ENCODE measurements at regions of chrX and their contacts with region 1.

Region 1: DNA sequence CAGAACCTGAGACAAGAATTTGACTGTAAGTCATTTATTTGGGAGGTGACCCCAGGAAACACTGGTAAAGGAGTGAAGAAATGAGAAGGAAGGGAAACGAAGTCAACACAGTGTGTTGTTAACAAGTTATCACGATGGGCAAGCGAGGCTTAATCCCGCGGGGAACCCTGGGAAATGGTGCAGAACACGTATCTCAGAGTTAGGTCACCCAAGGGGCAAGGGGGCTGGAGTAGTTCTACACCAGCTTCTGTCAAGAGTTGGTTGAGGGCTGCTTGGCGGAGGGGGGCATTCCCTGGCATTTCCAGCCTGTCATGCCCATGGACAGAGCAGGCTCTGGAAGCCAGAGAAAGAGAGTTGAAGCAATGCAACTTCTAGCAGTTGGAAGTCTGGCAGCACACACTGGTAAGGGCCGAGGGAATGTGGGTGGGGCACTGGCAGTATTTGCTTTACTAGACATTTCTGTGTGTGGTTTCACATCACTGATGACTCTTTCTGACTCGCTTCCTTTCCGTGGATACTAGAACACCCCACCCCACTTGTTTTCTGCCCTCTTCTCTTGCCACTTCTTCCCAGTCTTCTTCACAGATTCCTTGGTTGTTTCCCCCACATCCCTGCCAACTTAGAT is 52.2 kb upstream of the ADGRG2 start:
- DNase-seq: peak; percentile 74
- H3K4me3 ChIP-seq: no peak overlapping the region
- H3K27ac ChIP-seq: peak overlapping the region; percentile 96
- H3K4me1 ChIP-seq: peaks cover 64% of the 10 kb centered on the region
- H3K27me3 ChIP-seq: no peaks in the 10 kb centered on the region
- CTCF ChIP-seq: no peak

Region 2: DNA sequence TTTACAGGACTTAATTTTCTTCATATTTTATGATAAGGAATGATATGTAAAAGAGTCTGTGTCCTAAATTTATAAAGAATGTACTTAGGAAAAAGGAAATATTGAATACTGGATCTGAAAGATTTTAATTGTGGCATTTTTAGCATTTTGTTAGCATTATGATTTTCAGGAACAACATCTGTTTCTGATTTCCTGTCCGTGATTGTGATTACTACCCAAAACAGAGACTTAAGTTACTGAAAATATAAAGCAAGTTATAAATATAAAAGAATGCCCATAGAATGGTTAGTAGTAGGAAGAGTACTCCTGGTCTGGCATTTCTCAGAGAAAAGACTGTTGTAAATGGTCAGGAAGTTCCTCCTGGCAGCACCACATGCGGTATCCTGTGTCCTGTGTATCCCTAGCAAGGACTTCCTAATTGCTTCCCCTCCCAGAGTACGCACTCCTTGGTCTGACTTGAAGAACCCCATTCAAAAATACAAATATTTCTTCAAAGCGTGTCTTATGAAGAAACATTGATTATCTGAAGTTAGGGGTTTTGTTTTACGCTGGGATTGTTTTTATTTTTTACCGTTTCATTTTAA is 591.5 kb before region 1 on chrX:
- CTCF ChIA-PET with region 1: no interaction called
- POLR2A ChIA-PET with region 1: no interaction called
- intact Hi-C with region 1: loop called (anchors 5 kb)
- DNase-seq: peak; percentile 93
- H3K4me3 ChIP-seq: peak overlapping the region; percentile 3
- H3K27ac ChIP-seq: peak overlapping the region; percentile 77
- H3K4me1 ChIP-seq: peaks cover 39% of the 10 kb centered on the region
- H3K27me3 ChIP-seq: no peaks in the 10 kb centered on the region
- CTCF ChIP-seq: no peak

Region 3: GRCh38 chrX:18994738-18995137 is 179.8 kb before region 1 on chrX:
- CTCF ChIA-PET with region 1: no interaction called
- POLR2A ChIA-PET with region 1: no interaction called
- intact Hi-C with region 1: loop called (anchors 1 kb)
- DNase-seq: no peak
- H3K4me3 ChIP-seq: no peak overlapping the region
- H3K27ac ChIP-seq: no peak overlapping the region
- H3K4me1 ChIP-seq: peaks cover 32% of the 10 kb centered on the region
- H3K27me3 ChIP-seq: no peaks in the 10 kb centered on the region
- CTCF ChIP-seq: no peak

Region 4: DNA sequence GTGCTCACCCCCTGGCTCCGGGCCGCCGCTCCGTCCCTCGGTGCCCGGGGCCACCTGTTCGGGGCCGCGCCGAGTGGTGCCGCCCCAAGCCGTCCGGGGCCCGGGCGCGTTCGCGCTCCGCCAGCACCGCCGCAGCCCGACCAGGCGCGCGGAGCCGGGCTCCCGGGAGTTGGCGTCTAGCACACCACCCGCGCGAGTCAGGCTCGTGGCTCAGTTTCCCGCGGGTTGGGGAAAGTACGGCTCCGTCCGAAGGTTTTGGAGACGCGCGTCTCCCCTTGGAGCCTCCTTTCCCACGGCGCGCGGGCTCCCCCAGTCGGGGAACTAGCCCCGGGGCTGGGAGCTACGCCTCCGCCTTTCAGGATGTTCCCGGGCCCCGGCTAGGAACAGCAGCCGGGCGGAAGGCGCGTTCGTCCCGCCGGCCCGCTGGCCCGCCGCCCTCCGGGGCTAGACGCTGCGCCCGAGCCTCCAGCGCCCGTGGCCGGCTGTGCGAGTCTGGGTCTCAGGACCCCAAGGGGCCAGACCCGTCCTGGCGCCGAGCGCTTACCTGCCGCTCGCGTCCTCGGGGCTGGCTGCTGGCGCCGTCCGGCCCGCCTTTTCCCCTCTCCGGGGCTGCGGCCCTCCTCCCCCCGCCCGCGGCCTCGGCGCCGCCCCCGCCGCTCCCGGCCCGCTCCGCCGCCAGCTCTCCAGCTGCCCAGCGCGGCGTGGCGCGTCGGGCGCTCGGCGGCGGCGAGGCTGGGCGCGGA is 52.4 kb before region 1 on chrX and contains the start of gene ADGRG2:
- CTCF ChIA-PET with region 1: no interaction called
- POLR2A ChIA-PET with region 1: interaction called, 4 read pairs
- intact Hi-C with region 1: loop called (anchors 2 kb)
- DNase-seq: peak; percentile 86
- H3K4me3 ChIP-seq: peak within 1 kb of the TSS; percentile 75
- H3K27ac ChIP-seq: peak within 1 kb of the TSS; percentile 96
- H3K4me1 ChIP-seq: peaks cover 38% of the 10 kb centered on the region
- H3K27me3 ChIP-seq: no peaks in the 10 kb centered on the region
- CTCF ChIP-seq: peak; percentile 42
- total RNA-seq, gene ADGRG2: 61.3 and 73.6 TPM in 2 replicates

Region 5: GRCh38 chrX:19303256-19303880 is 128.9 kb after region 1 on chrX:
- CTCF ChIA-PET with region 1: no interaction called
- POLR2A ChIA-PET with region 1: no interaction called
- intact Hi-C with region 1: no loop called
- DNase-seq: peak; percentile 59
- H3K4me3 ChIP-seq: no peak overlapping the region
- H3K27ac ChIP-seq: no peak overlapping the region
- H3K4me1 ChIP-seq: no peaks in the 10 kb centered on the region
- H3K27me3 ChIP-seq: no peaks in the 10 kb centered on the region
- CTCF ChIP-seq: no peak